ENCODE measurements at regions of chr2 and their contacts with region 1.

Region 1: GRCh38 chr2:218360447-218360846 is 3.8 kb downstream of the CATIP start:
- DNase-seq: no peak
- ATAC-seq: no peak
- H3K4me3 ChIP-seq: no peak overlapping the region
- H3K27ac ChIP-seq: no peak overlapping the region
- H3K4me1 ChIP-seq: no peaks in the 10 kb centered on the region
- H3K27me3 ChIP-seq: no peaks in the 10 kb centered on the region
- CTCF ChIP-seq: no peak

Region 2: DNA sequence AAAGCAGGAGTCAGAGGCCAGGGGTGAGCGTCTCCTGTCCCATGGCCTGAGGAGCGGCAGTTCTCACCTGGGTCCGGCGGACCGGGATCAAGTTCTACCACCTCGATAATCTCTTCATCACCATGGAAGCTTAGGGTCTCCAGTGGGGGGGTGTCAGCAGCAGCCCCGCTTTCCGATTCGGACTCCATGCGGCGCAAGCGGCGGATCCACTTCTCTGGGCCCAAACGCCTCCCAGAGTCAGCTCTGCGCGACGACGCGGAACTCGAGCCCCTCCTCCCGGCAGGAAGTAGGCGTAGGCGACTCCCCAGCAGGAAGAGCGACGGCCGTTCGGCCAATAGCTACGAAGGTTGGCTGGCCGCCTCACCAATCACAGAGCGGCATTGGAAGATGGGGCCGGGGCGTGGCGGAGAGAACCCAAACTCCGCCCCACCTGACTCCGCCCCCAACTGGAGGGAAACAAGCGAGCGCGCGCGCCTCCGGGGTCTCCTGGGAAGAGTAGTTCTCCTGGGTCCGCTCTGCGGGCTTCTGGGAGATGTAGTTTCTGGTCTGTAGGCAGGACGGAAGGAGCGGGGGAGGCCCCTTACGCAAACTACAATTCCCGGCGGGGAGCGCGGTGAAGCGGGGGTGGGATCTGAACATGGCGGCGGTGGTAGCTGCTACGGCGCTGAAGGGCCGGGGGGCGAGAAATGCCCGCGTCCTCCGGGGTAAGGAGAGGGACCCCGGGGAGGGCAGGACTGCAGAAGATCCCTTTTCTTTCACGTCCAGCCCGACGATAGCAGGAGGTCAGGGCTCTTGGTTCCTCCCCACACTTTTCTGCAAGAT is 90.3 kb before region 1 on chr2 and contains the starts of genes AAMP and PNKD:
- CTCF ChIA-PET with region 1: interaction called, 13 read pairs
- POLR2A ChIA-PET with region 1: no interaction called
- intact Hi-C with region 1: loop called (anchors 1 kb)
- DNase-seq: peak; percentile 99
- ATAC-seq: peak; percentile 87
- H3K4me3 ChIP-seq: peak within 1 kb of the TSS; percentile 90
- H3K27ac ChIP-seq: 0 out of 2 replicates have a peak within 1 kb of the TSS, but pooled peaks have one; percentile 2
- H3K4me1 ChIP-seq: peaks cover 19% of the 10 kb centered on the region
- H3K27me3 ChIP-seq: no peaks in the 10 kb centered on the region
- CTCF ChIP-seq: 0 out of 2 replicates have a peak, but pooled peaks have one; percentile 12
- total RNA-seq, gene AAMP: 272 and 312 TPM in 2 replicates
- total RNA-seq, gene PNKD: 95.5 and 97.7 TPM in 2 replicates

Region 3: GRCh38 chr2:218275371-218276072 is 84.9 kb before region 1 on chr2:
- CTCF ChIA-PET with region 1: interaction called, 13 read pairs
- POLR2A ChIA-PET with region 1: interaction called, 18 read pairs
- intact Hi-C with region 1: loop called (anchors 1 kb)
- DNase-seq: no peak
- ATAC-seq: no peak
- H3K4me3 ChIP-seq: no peak overlapping the region
- H3K27ac ChIP-seq: no peak overlapping the region
- H3K4me1 ChIP-seq: peaks cover 19% of the 10 kb centered on the region
- H3K27me3 ChIP-seq: no peaks in the 10 kb centered on the region
- CTCF ChIP-seq: no peak

Region 4: DNA sequence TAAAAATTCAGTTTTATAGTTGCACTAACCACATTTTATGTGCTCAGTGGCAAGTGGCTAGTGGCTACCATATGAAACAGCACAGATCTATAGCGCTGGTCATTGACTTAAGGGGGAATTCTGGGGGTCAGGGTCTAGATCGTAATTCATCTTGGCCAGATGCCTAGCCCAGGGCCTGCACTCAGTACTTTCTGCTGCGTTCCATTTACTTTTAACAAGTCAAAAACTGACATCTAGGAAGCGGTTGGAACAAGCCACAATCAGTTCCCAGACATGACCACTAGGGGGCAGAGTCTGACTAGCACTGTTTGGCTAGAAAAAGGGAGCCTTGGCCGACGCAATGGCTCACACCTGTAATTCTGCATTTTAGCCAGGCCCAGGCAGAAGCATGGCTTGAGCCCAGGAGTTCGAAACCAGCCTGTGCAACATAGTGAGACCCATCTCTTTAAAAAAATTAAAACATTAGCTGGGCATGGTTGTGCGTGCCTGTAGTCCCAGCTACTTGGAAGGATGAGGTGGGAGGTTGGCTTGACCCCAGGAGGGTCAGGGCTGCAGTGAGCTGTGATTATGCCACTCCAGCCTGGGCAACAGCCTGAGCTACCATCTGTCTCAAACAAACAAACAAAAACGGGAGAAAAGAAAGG is 59.1 kb before region 1 on chr2:
- CTCF ChIA-PET with region 1: interaction called, 3 read pairs
- POLR2A ChIA-PET with region 1: no interaction called
- intact Hi-C with region 1: loop called (anchors 1 kb)
- DNase-seq: peak; percentile 96
- ATAC-seq: peak; percentile 94
- H3K4me3 ChIP-seq: no peak overlapping the region
- H3K27ac ChIP-seq: no peak overlapping the region
- H3K4me1 ChIP-seq: no peaks in the 10 kb centered on the region
- H3K27me3 ChIP-seq: no peaks in the 10 kb centered on the region
- CTCF ChIP-seq: peak; percentile 93

Measured in PC-3 (cell line).